AG04450 (cell line): ENCODE measurements at regions of chr3 and their contacts with region 1.

Region 1: DNA sequence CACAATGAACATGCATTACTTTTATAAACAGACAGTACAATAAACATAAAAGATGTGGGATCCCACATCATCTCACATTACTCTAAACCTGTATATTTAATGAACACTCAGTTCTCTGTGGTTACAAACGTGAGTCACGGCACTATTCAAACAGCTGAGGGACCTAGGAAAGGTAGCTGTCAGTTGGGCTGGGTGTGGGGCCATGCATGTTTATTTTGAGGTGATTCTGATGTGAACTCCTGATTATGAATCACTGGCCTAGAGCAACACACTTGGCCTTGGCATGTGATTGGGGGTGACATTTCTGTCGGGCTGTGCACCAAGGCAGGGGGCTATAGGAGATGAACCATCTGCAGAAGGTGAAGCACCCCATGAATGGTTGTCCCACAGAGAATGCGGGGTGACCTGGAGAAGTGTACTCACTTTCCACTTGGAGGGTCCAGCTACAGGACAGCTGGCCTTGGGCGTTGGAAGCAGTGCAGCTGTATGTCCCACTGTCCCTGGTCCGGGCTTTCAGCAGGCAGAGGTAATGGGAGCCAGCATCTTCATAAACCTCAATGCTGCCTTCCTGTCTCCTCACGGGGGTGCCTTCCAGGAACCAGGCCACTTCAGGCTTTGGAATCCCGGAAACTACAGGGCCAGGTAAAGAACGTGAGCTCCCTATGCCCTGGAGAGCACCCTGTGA is 147.8 kb upstream of the HACD2 start:
- DNase-seq: peak; percentile 88
- H3K4me3 ChIP-seq: no peak overlapping the region
- H3K27ac ChIP-seq: peak overlapping the region; percentile 91
- H3K27me3 ChIP-seq: no peaks in the 10 kb centered on the region
- CTCF ChIP-seq: no peak

Region 2: GRCh38 chr3:123773681-123774431 is 41.2 kb after region 1 on chr3:
- CTCF ChIA-PET with region 1: interaction called, 7 read pairs
- POLR2A ChIA-PET with region 1: interaction called, 10 read pairs
- DNase-seq: peak; percentile 44
- H3K4me3 ChIP-seq: no peak overlapping the region
- H3K27ac ChIP-seq: peak overlapping the region; percentile 81
- H3K27me3 ChIP-seq: no peaks in the 10 kb centered on the region
- CTCF ChIP-seq: peak; percentile 26; the same call in 1 of the 2 replicates

Region 3: GRCh38 chr3:123791898-123792297 is 59.3 kb after region 1 on chr3:
- CTCF ChIA-PET with region 1: no interaction called
- POLR2A ChIA-PET with region 1: interaction called, 17 read pairs
- DNase-seq: no peak
- H3K4me3 ChIP-seq: no peak overlapping the region
- H3K27ac ChIP-seq: peak overlapping the region; percentile 82
- H3K27me3 ChIP-seq: no peaks in the 10 kb centered on the region
- CTCF ChIP-seq: no peak